Head of caudate nucleus (tissue), 42 donors: ENCODE measurements at regions of chr19 and their contacts with region 1.

Region 1: GRCh38 chr19:2739602-2740313 is at the start of gene SLC39A3:
- DNase-seq: peak; percentile 97 to 100 (median 99)

Region 2: DNA sequence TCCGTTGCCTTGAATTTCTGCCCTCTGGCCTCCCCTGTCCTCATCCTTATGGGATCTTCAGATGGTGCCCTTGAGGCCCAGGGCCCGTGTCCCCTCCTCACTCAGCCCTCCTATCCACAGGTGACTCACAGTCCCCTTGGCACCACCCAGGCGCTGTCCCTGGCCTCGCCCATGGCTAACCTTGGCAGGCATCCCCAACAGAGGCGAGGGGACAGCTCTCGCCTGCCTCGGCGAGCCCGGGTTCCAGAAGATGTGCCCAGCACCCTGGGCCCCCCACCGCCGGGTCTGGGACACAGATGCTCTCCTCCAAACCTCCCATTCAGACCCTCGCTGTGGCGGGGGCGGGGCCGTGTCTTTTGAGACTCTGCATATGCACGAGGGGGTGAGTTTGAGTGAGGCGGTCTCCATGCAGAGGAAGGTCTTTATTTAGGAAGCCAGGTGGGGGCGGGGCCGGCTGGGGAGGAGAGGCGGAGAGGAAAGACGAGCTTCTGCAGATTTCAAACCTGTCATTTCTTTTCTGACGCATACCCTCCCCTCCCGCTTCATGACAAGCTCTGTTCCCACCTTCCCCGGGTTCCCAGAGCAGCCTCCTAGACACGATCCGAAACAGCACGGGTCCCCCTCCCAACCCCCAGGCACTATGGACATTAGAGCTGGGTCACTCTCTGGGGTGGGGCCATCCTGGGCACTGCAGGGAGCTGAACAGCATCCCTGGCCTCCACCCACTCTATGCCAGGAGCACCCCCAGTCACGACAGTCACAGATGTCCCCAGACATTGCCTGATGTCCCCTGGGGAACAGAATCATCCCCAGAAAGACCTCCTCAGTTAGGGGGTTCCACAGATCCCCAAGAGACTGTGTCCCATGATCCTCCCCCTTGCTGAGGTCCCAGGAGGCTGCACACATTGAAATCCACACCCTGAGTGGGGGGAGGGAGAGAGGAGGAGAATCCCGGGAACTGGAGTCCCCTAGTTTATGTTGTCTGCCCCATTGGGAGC is 85.7 kb before region 1 on chr19:
- intact Hi-C with region 1: loop called (anchors 5 kb)
- DNase-seq: peak; percentile 46 to 92 (median 77)

Region 3: DNA sequence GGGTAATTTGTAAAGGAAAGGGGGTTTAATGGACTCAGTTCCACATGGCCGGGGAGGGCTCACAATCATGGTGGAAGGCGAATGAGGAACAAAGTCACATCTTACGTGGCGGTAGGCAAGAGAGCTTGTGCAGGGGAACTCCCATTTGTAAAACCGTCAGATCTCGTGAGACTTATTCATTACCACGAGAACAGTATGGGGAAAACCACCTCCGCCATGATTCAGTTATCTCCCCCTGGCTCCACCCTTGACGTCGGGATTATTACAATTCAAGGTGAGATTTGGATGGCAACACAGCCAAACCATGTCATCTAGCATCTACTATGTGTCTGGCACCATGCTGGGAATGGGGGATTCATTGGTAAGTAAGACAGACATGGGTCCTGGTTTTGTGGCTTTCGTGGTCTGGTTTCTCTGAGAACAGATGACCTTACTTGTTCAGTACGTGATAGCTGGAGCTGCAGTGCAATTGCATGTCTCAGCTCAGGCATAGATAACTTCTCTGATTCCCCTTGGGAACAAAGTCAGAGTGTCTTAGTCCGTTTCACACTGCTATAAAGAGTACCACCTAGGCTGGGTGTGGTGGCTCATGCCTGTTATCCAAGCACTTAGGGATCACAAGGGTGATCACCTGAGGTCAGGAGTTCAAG is 88.2 kb after region 1 on chr19:
- intact Hi-C with region 1: no loop called
- DNase-seq: no peak